H1 (cell line): ENCODE measurements at regions of chr11 and their contacts with region 1.

Region 1: GRCh38 chr11:68297812-68298658 is 14.4 kb upstream of the LRP5 start:
- DNase-seq: peak; percentile 38 to 96
- H3K4me3 ChIP-seq: no peak overlapping the region
- H3K27ac ChIP-seq: no peak overlapping the region
- H3K4me1 ChIP-seq: peaks cover 0 to 2% (median 0%) of the 10 kb centered on the region in 4 experiments; a peak in 2 of 7 replicates
- H3K27me3 ChIP-seq: no peaks in the 10 kb centered on the region; a peak in 2 of 7 replicates
- CTCF ChIP-seq: peak; percentile 94 to 98 (median 96)
- EP300 ChIP-seq: no peak
- POLR2A ChIP-seq: no peak
- RAD21 ChIP-seq: peak; percentile 93 to 98

Region 2: GRCh38 chr11:68213555-68214174 is 84.4 kb before region 1 on chr11:
- CTCF ChIA-PET with region 1: interaction called, 34 read pairs
- POLR2A ChIA-PET with region 1: interaction called, 11 read pairs
- DNase-seq: peak; percentile 70 to 93
- H3K4me3 ChIP-seq: peak overlapping the region; percentile 57 to 99 (median 74)
- H3K27ac ChIP-seq: peak overlapping the region; percentile 100
- H3K4me1 ChIP-seq: peaks cover 4 to 20% (median 10%) of the 10 kb centered on the region in 4 experiments
- H3K27me3 ChIP-seq: peaks cover 0 to 2% (median 0%) of the 10 kb centered on the region in 4 experiments; a peak in 2 of 7 replicates
- CTCF ChIP-seq: no peak
- EP300 ChIP-seq: peak in 1 of 2 experiments; percentile 18; a peak in 1 of 3 replicates
- POLR2A ChIP-seq: peak; percentile 94 to 97
- RAD21 ChIP-seq: no peak; a peak in 1 of 4 replicates

Region 3: GRCh38 chr11:68257475-68258362 is 40.3 kb before region 1 on chr11:
- CTCF ChIA-PET with region 1: interaction called, 141 read pairs
- POLR2A ChIA-PET with region 1: interaction called, 5 read pairs
- DNase-seq: peak; percentile 93 to 99
- H3K4me3 ChIP-seq: no peak overlapping the region
- H3K27ac ChIP-seq: no peak overlapping the region
- H3K4me1 ChIP-seq: peaks cover 0 to 10% (median 4%) of the 10 kb centered on the region in 4 experiments; a peak in 5 of 7 replicates
- H3K27me3 ChIP-seq: peaks cover 0 to 11% (median 4%) of the 10 kb centered on the region in 4 experiments; a peak in 2 of 7 replicates
- CTCF ChIP-seq: peak; percentile 65 to 84 (median 83)
- EP300 ChIP-seq: no peak
- POLR2A ChIP-seq: no peak
- RAD21 ChIP-seq: peak; percentile 84 to 86

Region 4: DNA sequence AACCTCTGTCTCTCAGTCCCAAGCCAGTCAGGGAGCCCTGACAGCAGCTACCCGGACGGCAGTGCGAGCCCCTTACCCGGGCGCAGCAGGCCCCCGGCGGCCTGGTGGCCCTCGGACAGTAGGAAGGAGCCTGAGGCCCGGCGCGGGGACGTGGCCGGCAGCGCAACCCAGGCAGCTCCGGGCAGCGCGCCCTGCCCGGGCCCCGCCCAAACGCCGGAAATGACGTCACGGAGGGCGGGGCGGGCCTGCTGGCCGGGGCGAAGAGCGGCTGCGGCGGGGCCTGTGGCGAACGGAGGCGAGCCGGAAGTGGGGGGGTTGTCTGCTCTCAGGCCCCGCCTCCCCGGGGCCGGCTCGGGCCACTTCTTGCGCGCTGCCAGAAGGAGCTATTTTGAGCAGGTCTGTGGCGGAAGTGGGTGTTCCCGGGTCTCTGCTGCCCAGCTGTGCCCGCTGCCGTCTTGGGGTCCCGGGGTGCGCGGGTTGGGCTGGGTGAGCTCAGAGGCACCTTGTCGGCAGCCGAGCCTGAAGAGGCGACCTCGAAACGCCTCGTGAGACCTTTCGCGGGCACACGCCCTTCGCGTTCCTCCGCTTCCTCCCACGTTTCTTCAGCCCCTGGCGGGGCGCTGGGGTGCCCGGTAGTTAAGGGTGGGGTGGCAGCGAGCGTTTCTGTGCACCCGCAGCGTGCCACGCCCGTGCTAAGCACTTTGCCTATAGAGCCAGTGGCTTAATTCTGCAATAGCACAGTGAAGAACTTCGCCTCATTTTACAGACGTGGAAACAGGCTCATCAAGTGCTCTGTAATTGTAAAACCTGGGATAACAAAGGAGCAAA is 26.0 kb before region 1 on chr11 and contains the start of gene C11orf24:
- CTCF ChIA-PET with region 1: interaction called, 49 read pairs
- POLR2A ChIA-PET with region 1: interaction called, 4 read pairs
- DNase-seq: peak; percentile 77 to 95
- H3K4me3 ChIP-seq: peak within 1 kb of the TSS; percentile 85 to 99 (median 96)
- H3K27ac ChIP-seq: peak within 1 kb of the TSS; percentile 86
- H3K4me1 ChIP-seq: peaks cover 0 to 5% (median 1%) of the 10 kb centered on the region in 4 experiments; a peak in 4 of 7 replicates
- H3K27me3 ChIP-seq: no peaks in the 10 kb centered on the region
- CTCF ChIP-seq: peak in 1 of 3 experiments; percentile 10; a peak in 1 of 4 replicates
- EP300 ChIP-seq: peak in 1 of 2 experiments; percentile 58; a peak in 1 of 3 replicates
- POLR2A ChIP-seq: peak; percentile 80 to 85
- RAD21 ChIP-seq: no peak
- total RNA-seq, gene C11orf24: 45.3 and 45.4 TPM in 2 replicates

Region 5: GRCh38 chr11:68287419-68287818 is 10.6 kb before region 1 on chr11:
- CTCF ChIA-PET with region 1: interaction called, 30 read pairs
- POLR2A ChIA-PET with region 1: no interaction called
- DNase-seq: no peak
- H3K4me3 ChIP-seq: no peak overlapping the region
- H3K27ac ChIP-seq: no peak overlapping the region
- H3K4me1 ChIP-seq: no peaks in the 10 kb centered on the region
- H3K27me3 ChIP-seq: no peaks in the 10 kb centered on the region
- CTCF ChIP-seq: no peak
- EP300 ChIP-seq: no peak
- POLR2A ChIP-seq: no peak
- RAD21 ChIP-seq: no peak

Region 6: GRCh38 chr11:68328374-68329091 is 30.5 kb after region 1 on chr11:
- CTCF ChIA-PET with region 1: interaction called, 20 read pairs
- POLR2A ChIA-PET with region 1: no interaction called
- DNase-seq: no peak
- H3K4me3 ChIP-seq: peak overlapping the region in 1 of 4 experiments; percentile 38; a peak in 4 of 8 replicates
- H3K27ac ChIP-seq: peak overlapping the region; percentile 54
- H3K4me1 ChIP-seq: peaks cover 31 to 65% (median 47%) of the 10 kb centered on the region in 4 experiments
- H3K27me3 ChIP-seq: no peaks in the 10 kb centered on the region
- CTCF ChIP-seq: no peak
- EP300 ChIP-seq: no peak
- POLR2A ChIP-seq: no peak; a peak in 1 of 3 replicates
- RAD21 ChIP-seq: no peak

Region 7: DNA sequence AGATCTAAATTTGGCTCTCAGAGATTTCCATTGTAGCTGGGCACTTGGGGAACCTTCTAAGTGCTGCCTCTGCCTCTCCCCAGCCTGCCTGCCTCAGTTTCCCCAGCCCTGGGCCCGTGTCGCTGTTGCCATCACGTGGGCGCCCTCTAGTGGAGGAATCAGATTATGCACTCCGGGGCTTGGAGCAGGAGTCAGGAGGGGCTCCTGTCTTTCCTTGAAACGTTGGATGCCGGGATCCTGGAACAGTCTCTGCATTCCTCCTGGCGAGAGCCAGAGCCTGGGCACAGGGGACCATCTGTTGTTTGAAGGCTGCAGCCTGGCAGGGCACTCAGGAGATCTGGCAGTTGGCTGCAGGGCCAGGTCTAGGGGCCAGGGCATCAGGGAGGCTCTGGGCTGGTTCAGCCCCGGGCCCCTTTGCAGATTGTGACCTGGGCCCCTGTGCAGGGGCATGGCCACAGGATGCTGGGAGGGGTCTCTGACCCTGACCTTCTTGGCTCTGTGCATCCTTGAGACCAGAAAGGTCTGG is 86.0 kb after region 1 on chr11:
- CTCF ChIA-PET with region 1: interaction called, 22 read pairs
- POLR2A ChIA-PET with region 1: no interaction called
- DNase-seq: peak; percentile 33 to 98
- H3K4me3 ChIP-seq: no peak overlapping the region
- H3K27ac ChIP-seq: no peak overlapping the region
- H3K4me1 ChIP-seq: no peaks in the 10 kb centered on the region
- H3K27me3 ChIP-seq: no peaks in the 10 kb centered on the region
- CTCF ChIP-seq: peak; percentile 93 to 96 (median 93)
- EP300 ChIP-seq: no peak
- POLR2A ChIP-seq: no peak
- RAD21 ChIP-seq: peak; percentile 94 to 97